ENCODE measurements at regions of chr4 and their contacts with region 1.

Region 1: GRCh38 chr4:89914609-89915550 is 20.2 kb downstream of the MMRN1 start:
- DNase-seq: no peak
- ATAC-seq: peak; percentile 40
- H3K4me3 ChIP-seq: no peak overlapping the region
- H3K27ac ChIP-seq: no peak overlapping the region
- H3K4me1 ChIP-seq: no peaks in the 10 kb centered on the region
- H3K27me3 ChIP-seq: no peaks in the 10 kb centered on the region
- CTCF ChIP-seq: no peak; a peak in 1 of 6 replicates
- EP300 ChIP-seq: no peak
- POLR2A ChIP-seq: no peak
- RAD21 ChIP-seq: 0 out of 2 replicates have a peak, but pooled peaks have one; percentile 28

Region 2: GRCh38 chr4:89024051-89024675 is 890.7 kb before region 1 on chr4:
- CTCF ChIA-PET with region 1: no interaction called
- POLR2A ChIA-PET with region 1: no interaction called
- RAD21 ChIA-PET with region 1: no interaction called
- SMC1A ChIA-PET with region 1: no interaction called
- in situ Hi-C with region 1: no loop called
- intact Hi-C with region 1: no loop called
- DNase-seq: peak; percentile 47
- ATAC-seq: peak; percentile 99
- H3K4me3 ChIP-seq: no peak overlapping the region
- H3K27ac ChIP-seq: no peak overlapping the region
- H3K4me1 ChIP-seq: no peaks in the 10 kb centered on the region
- H3K27me3 ChIP-seq: no peaks in the 10 kb centered on the region
- CTCF ChIP-seq: peak; percentile 61 to 83 (median 62); a peak in 5 of 6 replicates
- EP300 ChIP-seq: no peak
- POLR2A ChIP-seq: no peak
- RAD21 ChIP-seq: peak; percentile 93

Region 3: DNA sequence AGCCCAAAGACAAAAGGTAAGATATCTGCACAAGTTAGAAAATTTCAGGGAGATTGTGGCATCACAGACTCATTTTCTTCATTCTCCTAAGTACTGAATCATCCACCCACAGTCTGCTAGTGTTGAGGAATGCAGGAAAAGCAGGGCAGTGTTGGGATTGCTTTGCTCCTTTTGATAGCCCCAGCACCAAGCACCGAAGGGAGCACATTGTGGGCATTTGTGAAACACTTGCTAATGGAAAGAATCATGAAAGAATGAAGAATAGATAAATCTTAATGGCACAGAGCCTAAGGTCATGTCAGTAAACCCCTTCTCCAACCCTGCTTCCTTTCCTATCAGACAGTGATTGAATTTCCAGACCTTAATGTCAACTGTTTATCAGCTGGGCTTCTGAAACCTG is 504.2 kb before region 1 on chr4:
- CTCF ChIA-PET with region 1: no interaction called
- POLR2A ChIA-PET with region 1: no interaction called
- RAD21 ChIA-PET with region 1: no interaction called
- SMC1A ChIA-PET with region 1: no interaction called
- in situ Hi-C with region 1: no loop called
- intact Hi-C with region 1: no loop called
- DNase-seq: no peak
- ATAC-seq: no peak
- H3K4me3 ChIP-seq: no peak overlapping the region
- H3K27ac ChIP-seq: no peak overlapping the region
- H3K4me1 ChIP-seq: no peaks in the 10 kb centered on the region
- H3K27me3 ChIP-seq: no peaks in the 10 kb centered on the region
- CTCF ChIP-seq: no peak
- EP300 ChIP-seq: no peak
- POLR2A ChIP-seq: no peak
- RAD21 ChIP-seq: no peak

Region 4: DNA sequence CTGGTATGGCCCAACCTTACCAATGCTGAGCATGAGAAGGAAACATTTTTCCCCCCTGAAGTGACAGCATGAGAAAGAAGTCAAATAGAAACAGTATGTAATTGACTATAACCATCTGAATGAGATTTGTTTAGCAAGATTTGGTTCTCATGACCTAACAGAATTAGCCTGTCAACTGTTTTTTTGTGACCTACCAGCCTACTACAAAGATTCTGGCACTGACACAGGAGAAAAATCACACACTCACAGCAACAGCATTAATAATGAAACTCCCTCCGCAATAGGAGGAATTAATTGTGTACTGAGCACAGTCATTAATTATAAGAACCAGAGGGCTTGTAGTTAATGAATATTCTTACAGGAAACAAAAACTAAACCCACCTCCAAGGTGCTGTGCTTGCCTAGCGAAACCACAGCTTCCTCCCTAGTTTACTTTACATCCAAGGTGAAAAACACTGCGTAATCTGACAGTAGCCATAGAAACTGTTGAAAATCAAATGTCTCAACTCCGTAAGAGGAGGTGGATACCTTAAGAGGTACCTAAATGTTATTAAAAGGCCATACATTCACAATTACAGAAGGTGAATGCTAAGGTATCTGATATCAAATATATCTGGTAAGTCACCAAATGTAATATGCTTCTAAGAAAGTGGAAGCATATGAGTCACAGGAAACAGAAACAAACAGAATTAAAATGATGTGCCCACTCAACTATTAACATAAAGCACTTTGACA is 14.7 kb after region 1 on chr4:
- CTCF ChIA-PET with region 1: interaction called, 5 read pairs
- POLR2A ChIA-PET with region 1: interaction called, 4 read pairs
- RAD21 ChIA-PET with region 1: interaction called, 3 read pairs
- SMC1A ChIA-PET with region 1: interaction called, 41 read pairs
- in situ Hi-C with region 1: no loop called
- intact Hi-C with region 1: no loop called
- DNase-seq: peak; percentile 41
- ATAC-seq: peak; percentile 92
- H3K4me3 ChIP-seq: no peak overlapping the region
- H3K27ac ChIP-seq: no peak overlapping the region
- H3K4me1 ChIP-seq: 0 out of 2 replicates have a peak, but pooled peaks cover 3% of the 10 kb centered on the region
- H3K27me3 ChIP-seq: no peaks in the 10 kb centered on the region
- CTCF ChIP-seq: no peak
- EP300 ChIP-seq: peak in 1 of 2 experiments; percentile 50; a peak in 2 of 4 replicates
- POLR2A ChIP-seq: no peak
- RAD21 ChIP-seq: no peak